Natural killer cell (primary cell): ENCODE measurements at regions of chr6 and their contacts with region 1.

Region 1: GRCh38 chr6:57048577-57048976 is 2.1 kb downstream of the KIAA1586 start:
- DNase-seq: no peak
- ATAC-seq: no peak
- H3K4me3 ChIP-seq: no peak overlapping the region
- H3K4me3 Mint-ChIP-seq: peak overlapping the region; percentile 46
- H3K27ac ChIP-seq: no peak overlapping the region
- H3K27ac Mint-ChIP-seq: peak overlapping the region; percentile 48 to 54
- H3K4me1 ChIP-seq: peaks cover 4% of the 10 kb centered on the region
- H3K4me1 Mint-ChIP-seq: peaks cover 30 to 33% of the 10 kb centered on the region in 2 donors
- H3K27me3 ChIP-seq: no peaks in the 10 kb centered on the region
- H3K27me3 Mint-ChIP-seq: peaks cover 0 to 5% of the 10 kb centered on the region in 2 donors
- CTCF ChIP-seq: no peak

Region 2: GRCh38 chr6:57013521-57013926 is 35.1 kb before region 1 on chr6:
- intact Hi-C with region 1: no loop called
- DNase-seq: no peak
- ATAC-seq: no peak
- H3K4me3 ChIP-seq: no peak overlapping the region
- H3K4me3 Mint-ChIP-seq: no peak overlapping the region
- H3K27ac ChIP-seq: no peak overlapping the region
- H3K27ac Mint-ChIP-seq: no peak overlapping the region
- H3K4me1 ChIP-seq: no peaks in the 10 kb centered on the region
- H3K4me1 Mint-ChIP-seq: no peaks in the 10 kb centered on the region
- H3K27me3 ChIP-seq: no peaks in the 10 kb centered on the region
- H3K27me3 Mint-ChIP-seq: peaks cover 5 to 12% of the 10 kb centered on the region in 2 donors
- CTCF ChIP-seq: no peak

Region 3: DNA sequence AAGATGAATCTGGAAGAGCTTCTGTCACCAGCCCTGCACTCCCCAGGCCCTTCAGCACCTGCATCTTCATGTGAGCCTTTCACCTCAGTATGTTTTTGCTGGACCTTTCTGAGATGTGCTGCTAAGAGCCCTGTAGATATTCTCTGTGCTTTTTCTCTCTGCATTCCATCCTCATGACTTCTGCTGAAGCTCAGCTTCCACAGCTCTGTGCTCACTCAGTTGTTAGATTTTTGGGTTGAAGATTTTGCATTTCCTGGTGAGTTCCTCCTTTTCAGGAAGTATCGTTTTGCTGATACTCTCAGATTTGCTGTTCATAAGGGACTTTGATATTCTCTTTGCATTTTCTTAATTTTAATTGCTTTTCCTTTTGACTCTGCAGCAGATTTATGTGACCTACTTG is 16.2 kb after region 1 on chr6:
- intact Hi-C with region 1: no loop called
- DNase-seq: no peak
- ATAC-seq: no peak
- H3K4me3 ChIP-seq: no peak overlapping the region
- H3K4me3 Mint-ChIP-seq: no peak overlapping the region
- H3K27ac ChIP-seq: no peak overlapping the region
- H3K27ac Mint-ChIP-seq: no peak overlapping the region
- H3K4me1 ChIP-seq: no peaks in the 10 kb centered on the region
- H3K4me1 Mint-ChIP-seq: no peaks in the 10 kb centered on the region
- H3K27me3 ChIP-seq: no peaks in the 10 kb centered on the region
- H3K27me3 Mint-ChIP-seq: no peaks in the 10 kb centered on the region
- CTCF ChIP-seq: no peak

Region 4: GRCh38 chr6:57221936-57222742 is 173.6 kb after region 1 on chr6 and contains the start of gene RAB23:
- intact Hi-C with region 1: loop called (anchors 5 kb)
- DNase-seq: peak; percentile 83 to 93
- ATAC-seq: peak; percentile 90 to 91 (median 91)
- H3K4me3 ChIP-seq: peak within 1 kb of the TSS; percentile 98
- H3K4me3 Mint-ChIP-seq: peak within 1 kb of the TSS; percentile 99
- H3K27ac ChIP-seq: peak within 1 kb of the TSS; percentile 36
- H3K27ac Mint-ChIP-seq: peak within 1 kb of the TSS; percentile 82 to 94
- H3K4me1 ChIP-seq: peaks cover 7% of the 10 kb centered on the region
- H3K4me1 Mint-ChIP-seq: peaks cover 11% of the 10 kb centered on the region in 2 donors
- H3K27me3 ChIP-seq: peaks cover 11% of the 10 kb centered on the region
- H3K27me3 Mint-ChIP-seq: peaks cover 24 to 37% of the 10 kb centered on the region in 2 donors
- CTCF ChIP-seq: no peak
- total RNA-seq, gene RAB23: 0.31 to 1.3 (median 0.77) TPM